Dendritic cell treated with granulocyte-macrophage colony-stimulating factor and Interleukin-4, amounts not matched to agents 40 ng/mL and 50 ng/mL, for 4 days (primary cell): ENCODE measurements at regions of chr10 and their contacts with region 1.

Region 1: GRCh38 chr10:79555354-79556309 is 4.6 kb downstream of the SFTPA2 start:
- H3K4me3 Mint-ChIP-seq: no peak overlapping the region
- H3K27ac Mint-ChIP-seq: no peak overlapping the region
- H3K4me1 Mint-ChIP-seq: no peaks in the 10 kb centered on the region
- H3K27me3 Mint-ChIP-seq: peaks cover 2% of the 10 kb centered on the region

Region 2: GRCh38 chr10:79610601-79611191 is 55.1 kb after region 1 on chr10 and contains the start of gene SFTPA1:
- intact Hi-C with region 1: loop called (anchors 1 kb)
- H3K4me3 Mint-ChIP-seq: no peak within 1 kb of the TSS
- H3K27ac Mint-ChIP-seq: no peak within 1 kb of the TSS
- H3K4me1 Mint-ChIP-seq: no peaks in the 10 kb centered on the region
- H3K27me3 Mint-ChIP-seq: peaks cover 1% of the 10 kb centered on the region